ENCODE measurements at regions of chr9 and their contacts with region 1.

Region 1: GRCh38 chr9:132411091-132411508 is 1.1 kb downstream of the CFAP77 start:
- DNase-seq: peak; percentile 53
- H3K4me3 ChIP-seq: peak overlapping the region; percentile 36
- H3K27ac ChIP-seq: no peak overlapping the region
- H3K4me1 ChIP-seq: peaks cover 18% of the 10 kb centered on the region
- H3K27me3 ChIP-seq: peaks cover 20% of the 10 kb centered on the region
- CTCF ChIP-seq: peak; percentile 63

Region 2: GRCh38 chr9:132575005-132575609 is 164.0 kb after region 1 on chr9:
- intact Hi-C with region 1: loop called (anchors 5 kb)
- DNase-seq: peak; percentile 70
- H3K4me3 ChIP-seq: no peak overlapping the region
- H3K27ac ChIP-seq: no peak overlapping the region
- H3K4me1 ChIP-seq: no peaks in the 10 kb centered on the region
- H3K27me3 ChIP-seq: peaks cover 42% of the 10 kb centered on the region
- CTCF ChIP-seq: peak; percentile 77

Region 3: DNA sequence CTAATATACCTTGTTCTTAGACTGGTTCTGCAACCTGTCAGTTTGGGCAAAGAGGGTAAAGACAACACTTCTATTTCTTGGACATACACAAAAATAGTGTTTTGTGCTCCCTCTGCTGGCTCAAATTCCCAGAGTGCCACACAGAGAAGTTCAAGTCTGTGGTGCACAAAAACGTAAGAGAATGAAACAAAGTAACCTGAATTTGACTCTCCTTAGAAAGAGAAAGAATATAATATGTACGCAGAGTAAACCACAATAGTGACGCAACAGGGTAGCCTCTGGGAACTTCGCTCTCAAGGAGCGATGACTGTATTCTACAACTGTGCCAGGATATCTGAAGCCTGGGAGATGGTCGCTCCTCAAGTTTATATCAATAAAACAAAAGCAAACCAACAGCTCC is 240.2 kb after region 1 on chr9:
- intact Hi-C with region 1: loop called (anchors 10 kb)
- DNase-seq: peak; percentile 70
- H3K4me3 ChIP-seq: no peak overlapping the region
- H3K27ac ChIP-seq: no peak overlapping the region
- H3K4me1 ChIP-seq: no peaks in the 10 kb centered on the region
- H3K27me3 ChIP-seq: no peaks in the 10 kb centered on the region
- CTCF ChIP-seq: peak; percentile 46

Region 4: GRCh38 chr9:132768932-132769905 is 358.1 kb after region 1 on chr9:
- intact Hi-C with region 1: no loop called
- DNase-seq: peak; percentile 75
- H3K4me3 ChIP-seq: peak overlapping the region; percentile 91
- H3K27ac ChIP-seq: peak overlapping the region; percentile 88
- H3K4me1 ChIP-seq: no peaks in the 10 kb centered on the region
- H3K27me3 ChIP-seq: no peaks in the 10 kb centered on the region
- CTCF ChIP-seq: peak; percentile 40

Region 5: DNA sequence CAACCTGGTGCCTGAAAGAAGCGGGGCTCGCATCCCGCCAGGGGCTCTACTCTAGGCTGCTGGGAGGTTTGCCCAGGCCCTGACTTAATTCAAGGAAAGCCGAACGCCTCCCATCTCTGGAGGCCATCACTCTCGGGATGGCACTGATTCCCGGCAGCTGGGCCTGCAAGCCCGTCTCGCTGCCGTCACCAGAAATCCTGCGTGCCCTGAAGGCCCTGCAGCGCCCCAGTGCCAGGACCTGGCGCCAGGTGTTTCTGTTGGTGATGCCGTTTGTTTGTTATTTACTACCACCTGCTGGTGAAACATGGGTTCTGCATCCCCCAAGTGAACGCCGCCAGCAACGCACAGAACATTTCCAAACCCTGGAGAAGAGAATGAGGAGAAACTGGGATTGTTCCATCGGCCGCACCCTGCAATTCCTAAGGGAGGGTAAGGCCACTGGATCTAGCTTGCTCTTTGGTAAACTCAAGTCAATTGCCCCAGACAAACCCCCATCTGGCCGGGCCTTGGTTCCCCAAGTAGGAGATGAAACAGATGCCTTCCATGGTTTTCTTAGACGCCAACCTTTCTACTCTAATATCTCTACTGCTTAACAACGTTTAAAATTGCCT is 389.0 kb after region 1 on chr9:
- intact Hi-C with region 1: loop called (anchors 5 kb)
- DNase-seq: peak; percentile 72
- H3K4me3 ChIP-seq: no peak overlapping the region
- H3K27ac ChIP-seq: no peak overlapping the region
- H3K4me1 ChIP-seq: peaks cover 3% of the 10 kb centered on the region
- H3K27me3 ChIP-seq: peaks cover 4% of the 10 kb centered on the region
- CTCF ChIP-seq: peak; percentile 89